ENCODE measurements at regions of chr17 and their contacts with region 1.

Region 1: DNA sequence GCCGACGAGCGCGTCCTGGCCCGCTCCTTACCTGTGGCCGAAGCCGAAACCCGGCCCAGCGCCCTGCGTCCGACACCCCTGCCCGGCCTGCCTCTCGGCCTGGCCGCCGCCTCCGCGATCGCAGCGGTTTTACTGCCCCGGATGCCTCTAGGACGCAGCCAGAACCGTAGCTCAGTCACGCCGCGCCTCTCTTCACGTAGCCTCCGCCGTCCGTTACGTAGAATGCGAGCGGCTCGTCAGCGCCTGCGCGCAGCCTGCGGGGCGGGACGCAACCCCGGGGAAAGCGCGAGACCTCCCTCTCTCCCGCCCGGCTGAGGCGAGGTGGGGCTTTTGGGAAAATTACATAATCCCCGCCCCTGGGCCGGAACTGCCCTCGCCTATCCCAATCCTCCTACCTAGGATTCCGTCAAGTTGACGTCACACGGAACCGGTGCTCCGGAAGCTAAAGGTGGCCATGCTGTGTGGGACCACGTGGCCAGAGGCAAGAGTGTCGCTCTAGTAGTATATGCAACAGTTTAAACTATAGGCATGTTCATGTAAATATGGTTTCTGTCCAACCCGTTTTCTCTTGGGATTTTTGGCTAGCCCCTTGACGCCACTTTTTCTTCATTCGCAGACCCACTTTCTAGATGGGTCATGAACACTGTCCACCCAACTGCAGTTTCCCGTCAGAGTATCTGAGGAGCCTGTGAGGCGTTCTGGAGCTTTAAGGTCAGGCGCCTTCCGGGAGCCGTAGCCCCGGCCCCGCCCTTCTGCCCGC is at the start of gene CCDC47:
- DNase-seq: peak; percentile 95 to 99 (median 99)
- H3K4me3 ChIP-seq: peak within 1 kb of the TSS; percentile 98
- H3K4me3 Mint-ChIP-seq: peak within 1 kb of the TSS; percentile 92 to 100 (median 96)
- H3K27ac ChIP-seq: peak within 1 kb of the TSS; percentile 99
- H3K27ac Mint-ChIP-seq: peak within 1 kb of the TSS; percentile 96 to 100 (median 99)
- H3K4me1 ChIP-seq: peaks cover 52% of the 10 kb centered on the region
- H3K4me1 Mint-ChIP-seq: peaks cover 53 to 87% (median 70%) of the 10 kb centered on the region in 3 donors
- H3K27me3 ChIP-seq: no peaks in the 10 kb centered on the region
- H3K27me3 Mint-ChIP-seq: peaks cover 0 to 3% of the 10 kb centered on the region in 2 donors
- total RNA-seq, gene CCDC47: 93.0 to 94.5 TPM

Region 2: GRCh38 chr17:63621766-63622519 is 151.6 kb before region 1 on chr17 and contains the start of gene MAP3K3:
- CTCF ChIA-PET with region 1: no interaction called
- POLR2A ChIA-PET with region 1: interaction called, 16 read pairs
- DNase-seq: peak; percentile 94 to 98 (median 97)
- H3K4me3 ChIP-seq: peak within 1 kb of the TSS; percentile 70
- H3K4me3 Mint-ChIP-seq: peak within 1 kb of the TSS; percentile 95 to 99 (median 98)
- H3K27ac ChIP-seq: peak within 1 kb of the TSS; percentile 55
- H3K27ac Mint-ChIP-seq: peak within 1 kb of the TSS; percentile 71 to 95 (median 91)
- H3K4me1 ChIP-seq: peaks cover 36% of the 10 kb centered on the region
- H3K4me1 Mint-ChIP-seq: peaks cover 44 to 47% (median 46%) of the 10 kb centered on the region in 3 donors
- H3K27me3 ChIP-seq: no peaks in the 10 kb centered on the region
- H3K27me3 Mint-ChIP-seq: peaks cover 0 to 1% of the 10 kb centered on the region in 2 donors
- total RNA-seq, gene MAP3K3: 34.7 to 35.8 TPM

Region 3: DNA sequence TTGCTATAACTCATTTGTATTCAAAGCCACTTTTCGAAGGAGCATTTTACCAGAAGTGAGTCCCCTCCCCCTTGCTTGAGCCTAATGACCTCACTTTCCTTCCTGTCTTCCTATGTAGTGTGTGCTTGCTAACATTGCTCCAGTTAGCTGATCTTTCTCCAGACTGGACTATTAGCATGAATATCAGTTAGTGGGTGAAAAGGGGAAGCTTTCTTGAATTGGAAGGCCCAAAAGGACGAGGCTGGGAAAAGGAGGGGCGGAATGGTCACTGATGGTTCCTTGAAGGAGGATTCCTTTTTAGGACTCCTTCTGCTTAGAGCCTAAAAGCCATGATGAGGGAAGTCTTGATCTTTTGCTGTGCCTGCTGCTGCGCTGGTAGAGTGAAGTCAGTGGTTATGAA is 139.4 kb before region 1 on chr17:
- CTCF ChIA-PET with region 1: no interaction called
- POLR2A ChIA-PET with region 1: no interaction called
- DNase-seq: no peak
- H3K4me3 ChIP-seq: no peak overlapping the region
- H3K4me3 Mint-ChIP-seq: no peak overlapping the region
- H3K27ac ChIP-seq: no peak overlapping the region
- H3K27ac Mint-ChIP-seq: peak overlapping the region in 4 of 8 donors; percentile 18 to 70 (median 50)
- H3K4me1 ChIP-seq: peaks cover 10% of the 10 kb centered on the region
- H3K4me1 Mint-ChIP-seq: peaks cover 21 to 49% (median 39%) of the 10 kb centered on the region in 3 donors
- H3K27me3 ChIP-seq: no peaks in the 10 kb centered on the region
- H3K27me3 Mint-ChIP-seq: no peaks in the 10 kb centered on the region

Region 4: DNA sequence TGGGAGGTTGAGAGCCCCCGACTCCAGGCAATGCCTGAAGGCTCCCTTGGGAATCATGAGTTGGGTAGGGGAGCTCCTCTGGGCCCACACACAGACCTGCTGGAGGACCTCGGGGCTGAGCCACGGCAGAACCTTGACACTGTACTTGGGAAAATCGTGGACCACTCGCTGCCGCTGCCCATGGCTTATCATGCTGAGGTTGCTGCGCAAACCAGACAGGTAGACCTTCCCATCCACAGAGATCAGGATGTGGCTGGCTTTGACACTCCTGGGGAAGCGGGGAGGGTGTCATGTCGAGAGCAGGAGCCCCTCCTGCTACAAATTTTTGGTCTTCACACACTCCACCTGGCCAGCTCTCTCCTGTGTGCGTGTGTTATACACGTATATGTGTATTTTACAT is 66.4 kb before region 1 on chr17:
- CTCF ChIA-PET with region 1: interaction called, 16 read pairs
- POLR2A ChIA-PET with region 1: interaction called, 45 read pairs
- DNase-seq: peak in 4 of 5 donors; percentile 21 to 67 (median 61)
- H3K4me3 ChIP-seq: peak overlapping the region; percentile 55
- H3K4me3 Mint-ChIP-seq: peak overlapping the region; percentile 79 to 88 (median 84)
- H3K27ac ChIP-seq: peak overlapping the region; percentile 62
- H3K27ac Mint-ChIP-seq: peak overlapping the region; percentile 80 to 99 (median 95)
- H3K4me1 ChIP-seq: peaks cover 86% of the 10 kb centered on the region
- H3K4me1 Mint-ChIP-seq: peaks cover 70 to 85% (median 74%) of the 10 kb centered on the region in 3 donors
- H3K27me3 ChIP-seq: no peaks in the 10 kb centered on the region
- H3K27me3 Mint-ChIP-seq: no peaks in the 10 kb centered on the region

Region 5: GRCh38 chr17:63827002-63827771 is 53.6 kb after region 1 on chr17 and contains the starts of genes FTSJ3 and PSMC5:
- CTCF ChIA-PET with region 1: no interaction called
- POLR2A ChIA-PET with region 1: interaction called, 26 read pairs
- DNase-seq: peak; percentile 92 to 98 (median 95)
- H3K4me3 ChIP-seq: peak within 1 kb of the TSS; percentile 94
- H3K4me3 Mint-ChIP-seq: peak within 1 kb of the TSS; percentile 95 to 100 (median 97)
- H3K27ac ChIP-seq: peak within 1 kb of the TSS; percentile 78
- H3K27ac Mint-ChIP-seq: peak within 1 kb of the TSS; percentile 97 to 100 (median 99)
- H3K4me1 ChIP-seq: peaks cover 55% of the 10 kb centered on the region
- H3K4me1 Mint-ChIP-seq: peaks cover 68 to 89% (median 72%) of the 10 kb centered on the region in 3 donors
- H3K27me3 ChIP-seq: no peaks in the 10 kb centered on the region
- H3K27me3 Mint-ChIP-seq: peaks cover 0 to 2% of the 10 kb centered on the region in 2 donors
- total RNA-seq, gene FTSJ3: 98.1 to 102 TPM
- total RNA-seq, gene PSMC5: 208 to 212 TPM

Region 6: GRCh38 chr17:63876855-63877254 is 103.3 kb after region 1 on chr17:
- CTCF ChIA-PET with region 1: no interaction called
- POLR2A ChIA-PET with region 1: no interaction called
- DNase-seq: no peak
- H3K4me3 ChIP-seq: no peak overlapping the region
- H3K4me3 Mint-ChIP-seq: no peak overlapping the region
- H3K27ac ChIP-seq: no peak overlapping the region
- H3K27ac Mint-ChIP-seq: no peak overlapping the region
- H3K4me1 ChIP-seq: no peaks in the 10 kb centered on the region
- H3K4me1 Mint-ChIP-seq: no peaks in the 10 kb centered on the region
- H3K27me3 ChIP-seq: no peaks in the 10 kb centered on the region
- H3K27me3 Mint-ChIP-seq: peaks cover 4 to 7% of the 10 kb centered on the region in 2 donors

Region 7: DNA sequence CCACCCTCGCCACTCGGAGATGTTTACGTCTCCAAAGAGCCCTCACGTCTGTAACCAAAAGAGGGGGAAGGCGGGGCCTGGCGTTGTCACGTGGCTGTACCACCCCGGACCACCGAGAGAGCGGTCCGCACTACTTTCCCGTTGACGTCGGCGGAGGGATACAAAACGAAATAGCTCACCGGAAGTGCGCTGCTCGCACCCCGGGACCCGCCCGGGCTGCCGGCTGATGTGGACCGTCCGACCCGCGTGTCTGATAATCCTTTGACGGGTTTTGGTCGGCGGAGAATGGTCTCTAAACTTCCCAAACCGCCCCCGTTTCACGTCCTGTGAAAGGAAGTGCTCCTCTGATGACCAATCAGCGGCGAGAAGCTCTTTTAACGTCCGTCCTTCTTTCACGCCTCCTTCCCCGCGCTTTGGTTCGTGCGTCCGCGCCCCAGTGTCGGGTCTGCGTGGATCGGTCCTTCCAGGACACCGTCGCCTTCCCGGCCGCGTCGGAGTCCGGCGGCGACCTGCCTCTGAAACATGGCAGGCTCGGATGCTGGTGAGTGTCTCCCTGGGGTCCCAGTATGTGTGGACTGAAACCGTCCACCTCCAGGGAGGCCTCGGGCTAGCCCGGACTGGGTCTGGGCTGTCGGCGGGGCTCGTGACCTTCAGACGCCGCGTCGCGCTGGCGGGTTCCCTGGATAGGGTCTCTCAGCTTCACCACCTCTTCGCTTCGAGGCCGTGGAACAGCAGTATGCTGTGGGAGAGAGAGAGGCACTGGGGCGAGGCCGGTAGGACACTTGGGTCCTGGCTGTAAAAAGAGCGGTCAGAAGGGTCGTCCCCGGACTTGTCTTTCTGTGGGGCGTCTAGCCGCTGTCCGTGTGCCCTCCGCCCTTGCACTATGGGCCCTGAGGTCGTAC is 733.3 kb after region 1 on chr17 and contains the start of gene CEP95:
- CTCF ChIA-PET with region 1: no interaction called
- POLR2A ChIA-PET with region 1: interaction called, 12 read pairs
- DNase-seq: peak; percentile 93 to 99 (median 97)
- H3K4me3 ChIP-seq: peak within 1 kb of the TSS; percentile 91
- H3K4me3 Mint-ChIP-seq: peak within 1 kb of the TSS; percentile 96 to 100 (median 99)
- H3K27ac ChIP-seq: peak within 1 kb of the TSS; percentile 98
- H3K27ac Mint-ChIP-seq: peak within 1 kb of the TSS; percentile 99 to 100 (median 99)
- H3K4me1 ChIP-seq: peaks cover 48% of the 10 kb centered on the region
- H3K4me1 Mint-ChIP-seq: peaks cover 52 to 77% (median 70%) of the 10 kb centered on the region in 3 donors
- H3K27me3 ChIP-seq: no peaks in the 10 kb centered on the region
- H3K27me3 Mint-ChIP-seq: peaks cover 0 to 24% of the 10 kb centered on the region in 2 donors
- total RNA-seq, gene CEP95: 39.3 to 43.5 TPM

Measured in CD8-positive, alpha-beta memory T cell (primary cell).